ENCODE measurements at regions of chr1 and their contacts with region 1.

Region 1: GRCh38 chr1:40612345-40612831 is 53.1 kb downstream of the RIMS3 start:
- DNase-seq: peak; percentile 38 to 85
- ATAC-seq: peak; percentile 81 to 97 (median 86)
- H3K4me3 ChIP-seq: no peak overlapping the region
- H3K4me3 Mint-ChIP-seq: no peak overlapping the region
- H3K27ac ChIP-seq: no peak overlapping the region
- H3K27ac Mint-ChIP-seq: no peak overlapping the region
- H3K4me1 ChIP-seq: no peaks in the 10 kb centered on the region
- H3K4me1 Mint-ChIP-seq: no peaks in the 10 kb centered on the region
- H3K27me3 ChIP-seq: no peaks in the 10 kb centered on the region
- H3K27me3 Mint-ChIP-seq: peaks cover under 1 to 5% of the 10 kb centered on the region in 2 donors
- CTCF ChIP-seq: peak; percentile 82

Region 2: GRCh38 chr1:40389871-40390560 is 222.4 kb before region 1 on chr1:
- intact Hi-C with region 1: no loop called
- DNase-seq: peak in 1 of 2 donors; percentile 54
- ATAC-seq: no peak
- H3K4me3 ChIP-seq: no peak overlapping the region
- H3K4me3 Mint-ChIP-seq: peak overlapping the region; percentile 73
- H3K27ac ChIP-seq: peak overlapping the region; percentile 75
- H3K27ac Mint-ChIP-seq: peak overlapping the region; percentile 93 to 98
- H3K4me1 ChIP-seq: peaks cover 84% of the 10 kb centered on the region
- H3K4me1 Mint-ChIP-seq: peaks cover 81 to 82% of the 10 kb centered on the region in 2 donors
- H3K27me3 ChIP-seq: no peaks in the 10 kb centered on the region
- H3K27me3 Mint-ChIP-seq: no peaks in the 10 kb centered on the region
- CTCF ChIP-seq: no peak

Region 3: DNA sequence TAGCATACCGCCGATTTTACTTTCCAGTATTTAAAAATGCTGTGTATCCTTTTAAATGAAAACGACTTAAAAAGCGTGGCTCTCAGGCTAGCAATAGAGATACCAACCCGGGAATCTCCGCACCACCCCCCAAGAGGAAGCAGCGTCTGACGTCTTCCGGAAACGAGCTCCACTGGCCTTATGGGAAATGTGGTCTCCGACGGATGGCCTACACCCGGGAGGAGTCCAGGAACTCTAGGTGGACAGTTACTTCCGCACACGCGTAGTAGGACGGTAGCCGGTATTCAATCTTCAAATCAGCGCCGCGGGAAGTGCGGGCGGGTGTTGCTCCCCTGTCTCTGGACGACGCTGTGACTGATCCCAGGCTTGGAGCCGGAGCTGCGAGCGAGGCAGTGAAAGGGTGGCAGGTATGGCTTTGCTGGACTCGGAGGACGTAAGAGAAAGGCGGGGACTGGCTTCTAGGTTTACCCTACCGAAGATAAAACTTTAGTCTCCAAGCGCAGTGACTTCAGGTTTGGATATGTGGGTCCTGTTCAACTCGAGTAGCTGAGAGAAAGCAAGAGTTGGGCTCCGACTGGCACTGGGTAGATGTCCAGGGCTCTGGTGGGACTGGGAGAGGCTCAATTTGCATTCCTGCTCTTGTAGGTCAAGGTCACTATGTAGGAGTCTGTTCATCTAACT is 80.9 kb before region 1 on chr1 and contains the start of gene ZNF684:
- intact Hi-C with region 1: no loop called
- DNase-seq: peak; percentile 69 to 95
- ATAC-seq: peak; percentile 96 to 98 (median 96)
- H3K4me3 ChIP-seq: peak within 1 kb of the TSS; percentile 70
- H3K4me3 Mint-ChIP-seq: peak within 1 kb of the TSS; percentile 98
- H3K27ac ChIP-seq: peak within 1 kb of the TSS; percentile 76
- H3K27ac Mint-ChIP-seq: peak within 1 kb of the TSS; percentile 92 to 98
- H3K4me1 ChIP-seq: peaks cover 8% of the 10 kb centered on the region
- H3K4me1 Mint-ChIP-seq: peaks cover 26% of the 10 kb centered on the region in 2 donors
- H3K27me3 ChIP-seq: peaks cover 2% of the 10 kb centered on the region
- H3K27me3 Mint-ChIP-seq: peaks cover 13 to 34% of the 10 kb centered on the region in 2 donors
- CTCF ChIP-seq: no peak
- total RNA-seq, gene ZNF684: 5.5 to 9.7 (median 5.7) TPM

Region 4: DNA sequence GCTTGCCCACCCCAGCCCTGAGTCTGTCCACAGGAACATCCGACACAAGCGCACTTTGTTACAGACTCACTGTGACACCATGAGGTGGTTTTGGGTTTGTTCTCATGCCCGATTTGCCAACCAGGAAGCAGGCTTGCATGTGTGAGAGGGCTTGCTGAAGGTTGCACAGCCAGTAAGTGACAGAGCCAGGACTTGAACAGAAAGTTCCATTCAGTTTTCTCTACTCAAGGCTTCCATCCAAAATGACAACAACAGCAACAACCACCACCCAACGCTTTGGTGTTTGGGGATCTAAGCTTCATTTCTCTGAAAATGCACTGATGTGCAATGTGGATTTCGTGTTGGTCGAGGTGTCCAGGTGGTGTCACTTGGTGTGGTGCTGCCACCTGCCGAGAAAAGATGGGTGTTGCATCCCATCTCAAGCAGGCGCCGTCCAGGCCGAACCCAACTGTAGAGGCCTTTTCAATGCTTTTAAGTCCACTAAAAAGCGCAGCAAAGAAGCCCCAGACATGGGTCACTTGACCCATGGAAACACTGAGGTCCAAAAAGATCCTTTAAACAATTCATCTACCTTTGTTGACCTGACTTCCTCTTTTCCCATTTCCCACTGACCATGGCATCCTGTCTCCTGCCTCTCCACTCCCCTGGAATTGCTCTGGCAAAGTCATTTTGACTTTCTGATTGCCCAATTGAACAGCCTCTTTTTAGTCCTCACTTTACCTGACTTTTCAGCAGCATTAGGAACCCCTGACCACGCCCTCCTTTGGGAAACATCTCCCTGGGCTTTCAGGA is 237.6 kb after region 1 on chr1:
- intact Hi-C with region 1: loop called (anchors 1 kb)
- DNase-seq: peak; percentile 74 to 88
- ATAC-seq: peak; percentile 91 to 97 (median 94)
- H3K4me3 ChIP-seq: no peak overlapping the region
- H3K4me3 Mint-ChIP-seq: peak overlapping the region; percentile 41
- H3K27ac ChIP-seq: no peak overlapping the region
- H3K27ac Mint-ChIP-seq: peak overlapping the region in 1 of 2 donors; percentile 44
- H3K4me1 ChIP-seq: peaks cover 8% of the 10 kb centered on the region
- H3K4me1 Mint-ChIP-seq: peaks cover 6 to 17% of the 10 kb centered on the region in 2 donors
- H3K27me3 ChIP-seq: no peaks in the 10 kb centered on the region
- H3K27me3 Mint-ChIP-seq: peaks cover 0 to 3% of the 10 kb centered on the region in 2 donors
- CTCF ChIP-seq: peak; percentile 93

Region 5: GRCh38 chr1:40951943-40952743 is 339.8 kb after region 1 on chr1:
- intact Hi-C with region 1: loop called (anchors 2 kb)
- DNase-seq: peak; percentile 52 to 76
- ATAC-seq: peak; percentile 64 to 82 (median 75)
- H3K4me3 ChIP-seq: no peak overlapping the region
- H3K4me3 Mint-ChIP-seq: no peak overlapping the region
- H3K27ac ChIP-seq: no peak overlapping the region
- H3K27ac Mint-ChIP-seq: no peak overlapping the region
- H3K4me1 ChIP-seq: peaks cover 6% of the 10 kb centered on the region
- H3K4me1 Mint-ChIP-seq: peaks cover 0 to 17% of the 10 kb centered on the region in 2 donors
- H3K27me3 ChIP-seq: no peaks in the 10 kb centered on the region
- H3K27me3 Mint-ChIP-seq: peaks cover 22 to 25% of the 10 kb centered on the region in 2 donors
- CTCF ChIP-seq: peak; percentile 85

Measured in natural killer cell (primary cell).